A549 (cell line): ENCODE measurements at regions of chr5 and their contacts with region 1.

Region 1: DNA sequence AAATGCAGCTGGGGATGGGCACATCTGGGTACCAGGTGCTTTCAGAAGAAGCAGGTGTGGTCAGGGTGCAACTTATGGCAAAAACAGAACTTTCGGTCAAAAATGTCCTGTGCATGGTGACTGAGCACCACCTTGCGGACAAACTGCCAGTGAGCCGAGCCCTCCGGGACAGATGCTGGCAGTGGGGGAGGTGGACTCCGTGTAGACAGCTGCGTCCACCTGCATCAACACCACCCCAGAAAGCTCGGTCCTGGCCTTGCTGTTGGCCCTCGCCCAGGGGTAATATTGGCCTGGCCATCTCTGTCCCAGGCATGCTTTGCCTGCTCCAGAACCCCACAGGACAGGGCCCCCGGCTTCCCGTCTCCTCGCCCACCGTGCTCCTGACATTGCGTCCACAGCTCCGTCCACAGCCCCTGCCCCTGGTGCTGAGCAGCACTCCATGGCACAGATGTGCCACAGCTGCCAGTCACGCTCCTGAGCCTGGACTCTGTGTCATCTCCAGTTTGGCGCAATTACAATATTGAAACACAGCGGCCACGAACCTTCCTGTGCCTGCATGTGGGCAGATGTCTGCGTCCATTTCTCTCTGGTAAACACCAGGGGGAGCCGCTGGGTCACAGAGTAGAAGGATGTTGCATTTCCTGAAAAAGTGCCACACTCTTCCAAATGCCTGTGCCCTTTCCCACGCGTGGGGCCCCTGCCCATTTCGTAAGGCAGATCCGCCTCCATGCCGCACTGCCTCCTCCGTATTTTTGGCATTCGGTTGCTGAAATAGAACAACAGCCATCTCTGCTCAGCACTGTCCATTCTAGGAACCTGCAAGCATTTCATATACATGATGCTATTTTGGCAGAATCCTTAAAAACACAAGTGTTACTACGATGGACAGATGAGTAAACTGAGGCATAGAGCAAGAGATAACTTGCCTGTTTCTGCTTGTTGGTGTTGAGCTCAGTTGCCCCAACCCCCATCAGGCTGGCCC is 33.4 kb upstream of the SLC6A19 start:
- DNase-seq: peak; percentile 75 to 85
- ATAC-seq: peak; percentile 81 to 92
- H3K4me3 ChIP-seq: peak overlapping the region; percentile 44
- H3K27ac ChIP-seq: peak overlapping the region; percentile 29 to 67; a peak in 4 of 6 replicates
- H3K4me1 ChIP-seq: no peaks in the 10 kb centered on the region
- CTCF ChIP-seq: peak; percentile 66
- EP300 ChIP-seq: no peak
- POLR2A ChIP-seq: no peak
- RAD21 ChIP-seq: peak; percentile 88 to 97

Region 2: GRCh38 chr5:932628-933250 is 235.3 kb before region 1 on chr5:
- CTCF ChIA-PET with region 1: interaction called, 16 read pairs
- POLR2A ChIA-PET with region 1: no interaction called
- DNase-seq: no peak
- ATAC-seq: no peak
- H3K4me3 ChIP-seq: no peak overlapping the region
- H3K27ac ChIP-seq: no peak overlapping the region
- H3K4me1 ChIP-seq: no peaks in the 10 kb centered on the region
- CTCF ChIP-seq: no peak
- EP300 ChIP-seq: no peak
- POLR2A ChIP-seq: no peak
- RAD21 ChIP-seq: no peak

Region 3: DNA sequence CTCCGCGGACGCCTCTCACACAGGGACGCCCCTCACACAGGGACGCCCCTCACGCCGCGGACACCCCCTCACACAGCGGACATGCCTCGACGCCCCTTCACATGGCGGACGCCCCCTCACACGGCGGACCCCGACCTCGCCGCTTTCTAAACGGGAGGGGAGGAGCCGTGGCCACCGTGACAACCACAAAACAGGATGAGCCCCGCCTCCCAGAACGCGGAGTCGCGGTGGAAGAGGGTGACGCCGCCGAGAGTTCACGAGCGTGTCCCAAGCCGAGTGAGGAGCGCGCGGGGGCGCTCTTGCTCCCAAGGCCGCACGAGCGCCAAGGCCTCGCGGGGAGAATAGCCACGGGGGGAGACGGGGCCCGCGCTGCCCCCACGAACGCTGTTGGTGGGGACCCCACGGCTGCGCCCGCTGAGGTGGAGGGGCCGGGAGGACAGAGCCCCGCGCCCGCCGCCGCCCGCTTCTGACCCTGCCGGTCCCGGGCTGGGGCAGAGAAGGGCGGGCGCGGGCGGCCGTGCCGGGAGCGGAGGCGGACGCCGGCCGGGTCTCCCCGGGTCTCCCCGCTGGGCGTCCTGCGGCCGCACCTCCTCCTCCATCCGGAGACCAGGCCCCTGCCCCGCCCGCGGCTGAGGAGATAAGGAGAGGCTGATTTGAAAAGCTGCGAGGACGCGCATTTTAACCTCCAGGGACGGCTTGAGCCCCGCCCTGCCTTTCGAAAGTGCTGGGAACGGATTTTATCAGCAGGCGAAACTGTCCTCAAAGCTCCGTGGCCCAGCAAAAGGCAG is 163.4 kb before region 1 on chr5:
- CTCF ChIA-PET with region 1: interaction called, 47 read pairs
- POLR2A ChIA-PET with region 1: no interaction called
- DNase-seq: peak; percentile 61 to 76
- ATAC-seq: peak; percentile 60 to 79
- H3K4me3 ChIP-seq: peak overlapping the region; percentile 63
- H3K27ac ChIP-seq: peak overlapping the region; percentile 89 to 92
- H3K4me1 ChIP-seq: peaks cover 16% of the 10 kb centered on the region
- CTCF ChIP-seq: peak; percentile 79
- EP300 ChIP-seq: no peak
- POLR2A ChIP-seq: peak; percentile 38; the same call in 1 of the 2 replicates
- RAD21 ChIP-seq: peak; percentile 35 to 59

Region 4: DNA sequence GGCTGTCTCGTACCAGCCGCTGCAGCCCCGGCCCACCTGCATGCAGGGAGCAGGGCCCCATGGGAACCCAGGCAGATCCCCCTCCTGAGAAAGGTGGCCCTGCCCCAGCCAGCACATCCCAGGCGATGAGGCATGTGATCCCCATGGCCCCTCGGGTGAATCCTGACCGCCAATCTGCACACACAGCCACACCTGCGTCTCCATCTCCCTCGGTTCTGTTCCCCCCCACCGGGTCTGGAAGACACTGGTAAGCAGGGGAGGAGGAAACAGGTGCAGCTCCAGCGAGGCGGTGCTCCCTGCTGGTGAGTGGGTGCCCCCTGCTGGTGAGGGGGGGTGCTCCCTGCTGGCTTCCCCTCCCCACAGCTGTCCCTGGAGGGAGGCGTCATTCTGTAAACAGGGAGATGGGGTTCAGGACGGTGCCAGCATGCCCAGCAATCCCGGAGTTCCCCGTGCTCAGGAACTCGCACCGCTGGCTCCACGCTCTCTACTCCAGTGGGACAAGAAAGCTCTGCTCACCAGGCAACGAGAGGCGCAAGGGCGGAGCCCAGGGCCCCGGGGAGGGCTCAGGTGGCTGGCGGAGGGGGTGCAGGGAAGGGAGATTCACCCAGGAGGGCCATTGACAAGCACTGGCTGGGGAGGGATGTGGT is 27.7 kb before region 1 on chr5:
- CTCF ChIA-PET with region 1: interaction called, 17 read pairs
- POLR2A ChIA-PET with region 1: no interaction called
- DNase-seq: peak; percentile 67
- ATAC-seq: peak; percentile 74 to 87
- H3K4me3 ChIP-seq: no peak overlapping the region
- H3K27ac ChIP-seq: 0 out of 6 replicates have a peak overlapping the region, but pooled peaks of 1 of the 2 experiments have one; percentile 24
- H3K4me1 ChIP-seq: peaks cover 5% of the 10 kb centered on the region; the same call in 2 of the 3 replicates
- CTCF ChIP-seq: peak; percentile 82
- EP300 ChIP-seq: no peak
- POLR2A ChIP-seq: no peak
- RAD21 ChIP-seq: peak; percentile 89 to 91

Region 5: GRCh38 chr5:1204693-1205242 is 36.7 kb after region 1 on chr5:
- CTCF ChIA-PET with region 1: interaction called, 20 read pairs
- POLR2A ChIA-PET with region 1: no interaction called
- DNase-seq: peak; percentile 28 to 58
- ATAC-seq: peak; percentile 25 to 57; a peak in 5 of 6 replicates
- H3K4me3 ChIP-seq: no peak overlapping the region
- H3K27ac ChIP-seq: no peak overlapping the region
- H3K4me1 ChIP-seq: no peaks in the 10 kb centered on the region; the same call in 2 of the 3 replicates
- CTCF ChIP-seq: no peak
- EP300 ChIP-seq: no peak
- POLR2A ChIP-seq: no peak
- RAD21 ChIP-seq: no peak

Region 6: GRCh38 chr5:1366514-1366913 is 198.5 kb after region 1 on chr5:
- CTCF ChIA-PET with region 1: no interaction called
- POLR2A ChIA-PET with region 1: no interaction called
- DNase-seq: no peak
- ATAC-seq: no peak
- H3K4me3 ChIP-seq: no peak overlapping the region
- H3K27ac ChIP-seq: no peak overlapping the region
- H3K4me1 ChIP-seq: no peaks in the 10 kb centered on the region
- CTCF ChIP-seq: no peak
- EP300 ChIP-seq: no peak
- POLR2A ChIP-seq: no peak
- RAD21 ChIP-seq: no peak